ENCODE measurements at regions of chr3 and their contacts with region 1.

Region 1: DNA sequence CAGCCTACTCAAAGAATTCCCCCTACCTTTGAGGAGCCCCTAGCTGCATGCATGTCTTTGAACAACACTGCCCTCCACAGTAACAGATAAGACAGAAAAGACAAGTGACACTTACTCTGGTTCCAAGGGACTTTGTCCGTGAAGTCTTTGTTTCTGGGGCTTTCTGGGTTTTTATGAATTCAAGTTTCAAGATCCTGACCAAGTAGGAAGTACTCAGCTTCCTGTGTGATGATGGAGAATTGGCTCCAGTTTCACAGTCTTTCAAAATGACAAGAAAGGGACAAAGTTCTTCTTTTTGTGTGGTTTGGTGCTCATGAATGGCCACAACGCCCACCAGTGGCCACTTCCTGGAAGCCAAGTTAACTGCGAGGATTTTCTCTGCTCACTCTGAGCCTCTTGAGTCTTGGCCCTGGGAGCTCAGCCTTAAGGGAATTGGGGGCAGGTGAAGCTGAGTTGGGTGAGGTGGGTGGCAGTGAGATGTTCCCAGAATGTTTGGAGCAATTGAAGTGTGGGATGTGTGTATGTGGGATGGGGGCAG is at the start of gene CCR1:
- H3K4me3 Mint-ChIP-seq: peak within 1 kb of the TSS; percentile 79
- H3K27ac Mint-ChIP-seq: peak within 1 kb of the TSS; percentile 97
- H3K4me1 Mint-ChIP-seq: peaks cover 54% of the 10 kb centered on the region
- H3K27me3 Mint-ChIP-seq: no peaks in the 10 kb centered on the region

Region 2: DNA sequence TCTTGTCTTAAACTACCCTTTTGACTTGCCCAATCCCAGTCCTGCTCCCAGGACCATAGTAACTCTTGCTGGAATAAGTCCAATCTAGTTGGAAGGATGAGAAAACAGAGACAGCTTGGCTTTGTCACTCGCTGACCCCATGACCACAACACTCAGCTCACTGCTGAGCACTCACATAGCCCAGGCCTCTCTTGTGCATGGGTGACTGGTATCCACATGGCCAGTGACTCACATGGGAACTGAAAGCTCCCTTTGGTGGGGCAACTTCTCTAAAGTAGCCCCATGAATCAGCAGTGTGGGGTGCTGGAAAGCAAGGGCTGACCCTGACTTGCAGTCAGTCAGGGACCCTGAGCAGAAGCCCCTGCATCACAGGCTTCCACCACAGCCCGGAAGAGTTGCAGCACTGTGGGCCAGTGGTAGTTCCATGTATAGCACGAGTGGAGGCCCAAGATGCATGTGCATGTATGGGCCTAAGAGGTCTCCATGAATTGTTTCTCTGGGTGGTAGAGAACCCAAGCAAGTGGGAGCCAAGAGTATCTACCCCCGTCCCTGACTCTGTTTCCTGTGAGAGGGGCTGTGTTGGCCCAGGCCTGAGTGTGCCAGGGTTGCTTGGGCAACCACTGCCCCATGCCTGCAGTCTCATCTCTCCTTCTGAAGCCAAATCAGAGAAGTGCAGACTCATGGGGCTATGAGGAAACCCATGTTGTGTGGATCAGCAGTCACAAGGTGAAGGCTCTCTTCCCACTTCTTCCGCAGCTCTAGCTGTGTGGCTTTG is 118.8 kb before region 1 on chr3:
- intact Hi-C with region 1: loop called (anchors 2 kb)
- H3K4me3 Mint-ChIP-seq: peak overlapping the region; percentile 55
- H3K27ac Mint-ChIP-seq: peak overlapping the region; percentile 100
- H3K4me1 Mint-ChIP-seq: peaks cover 92% of the 10 kb centered on the region
- H3K27me3 Mint-ChIP-seq: no peaks in the 10 kb centered on the region

Region 3: DNA sequence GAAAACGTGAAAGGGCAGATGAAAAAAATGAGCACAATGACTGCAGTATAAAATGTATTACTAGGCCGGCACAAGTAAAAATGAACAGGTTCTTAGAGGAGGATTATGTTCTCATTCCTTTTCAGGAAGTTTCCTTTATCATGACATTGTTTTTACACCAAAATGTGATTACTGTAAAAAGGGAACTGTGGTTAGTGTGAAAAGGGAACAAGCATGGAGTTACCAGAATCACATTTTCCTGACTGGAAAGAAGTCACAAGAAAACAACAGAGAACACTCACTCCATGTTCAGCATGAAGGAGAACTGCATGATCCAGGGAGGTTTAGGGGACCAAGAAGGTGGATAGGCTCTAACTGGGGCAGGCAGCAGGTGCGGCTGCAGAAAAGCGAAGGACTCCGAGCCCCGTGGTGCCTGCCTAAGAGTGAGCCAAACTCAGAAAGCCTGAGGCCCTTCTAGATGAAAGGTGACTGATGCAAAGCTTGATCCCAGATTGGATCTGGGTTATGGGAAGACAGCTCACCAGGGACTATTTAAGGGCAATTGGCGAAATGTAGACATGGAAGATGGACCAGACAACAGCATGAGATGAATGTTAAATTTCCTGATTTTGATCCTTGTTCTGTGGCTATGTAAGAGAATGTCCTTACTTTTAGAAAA is 77.5 kb before region 1 on chr3:
- intact Hi-C with region 1: loop called (anchors 5 kb)
- H3K4me3 Mint-ChIP-seq: peak overlapping the region; percentile 75
- H3K27ac Mint-ChIP-seq: no peak overlapping the region
- H3K4me1 Mint-ChIP-seq: peaks cover 3% of the 10 kb centered on the region
- H3K27me3 Mint-ChIP-seq: no peaks in the 10 kb centered on the region

Region 4: GRCh38 chr3:46312991-46313390 is 104.8 kb after region 1 on chr3:
- intact Hi-C with region 1: loop called (anchors 5 kb)
- H3K4me3 Mint-ChIP-seq: no peak overlapping the region
- H3K27ac Mint-ChIP-seq: peak overlapping the region; percentile 77
- H3K4me1 Mint-ChIP-seq: peaks cover 84% of the 10 kb centered on the region
- H3K27me3 Mint-ChIP-seq: no peaks in the 10 kb centered on the region

Region 5: GRCh38 chr3:46368569-46368968 is 160.3 kb after region 1 on chr3:
- intact Hi-C with region 1: loop called (anchors 2 kb)
- H3K4me3 Mint-ChIP-seq: peak overlapping the region; percentile 32
- H3K27ac Mint-ChIP-seq: peak overlapping the region; percentile 85
- H3K4me1 Mint-ChIP-seq: peaks cover 69% of the 10 kb centered on the region
- H3K27me3 Mint-ChIP-seq: no peaks in the 10 kb centered on the region